ENCODE measurements at regions of chr12 and their contacts with region 1.

Region 1: GRCh38 chr12:69540987-69541386 is 44.3 kb upstream of the CCT2 start:
- DNase-seq: no peak
- H3K4me3 ChIP-seq: no peak overlapping the region
- H3K27ac ChIP-seq: no peak overlapping the region
- H3K4me1 ChIP-seq: no peaks in the 10 kb centered on the region
- CTCF ChIP-seq: no peak

Region 2: GRCh38 chr12:69459477-69459876 is 81.5 kb before region 1 on chr12:
- CTCF ChIA-PET with region 1: no interaction called
- POLR2A ChIA-PET with region 1: no interaction called
- intact Hi-C with region 1: no loop called
- DNase-seq: no peak
- H3K4me3 ChIP-seq: no peak overlapping the region
- H3K27ac ChIP-seq: no peak overlapping the region
- H3K4me1 ChIP-seq: no peaks in the 10 kb centered on the region
- CTCF ChIP-seq: no peak

Region 3: GRCh38 chr12:69490920-69491643 is 49.9 kb before region 1 on chr12:
- CTCF ChIA-PET with region 1: no interaction called
- POLR2A ChIA-PET with region 1: interaction called, 15 read pairs
- intact Hi-C with region 1: no loop called
- DNase-seq: no peak
- H3K4me3 ChIP-seq: no peak overlapping the region
- H3K27ac ChIP-seq: no peak overlapping the region
- H3K4me1 ChIP-seq: no peaks in the 10 kb centered on the region
- CTCF ChIP-seq: no peak

Region 4: GRCh38 chr12:69676257-69677012 is 135.4 kb after region 1 on chr12:
- CTCF ChIA-PET with region 1: no interaction called
- POLR2A ChIA-PET with region 1: no interaction called
- intact Hi-C with region 1: no loop called
- DNase-seq: no peak
- H3K4me3 ChIP-seq: no peak overlapping the region
- H3K27ac ChIP-seq: no peak overlapping the region
- H3K4me1 ChIP-seq: no peaks in the 10 kb centered on the region
- CTCF ChIP-seq: peak; percentile 49; the same call in 1 of the 2 replicates